Activated naive CD4-positive, alpha-beta T cell treated with anti-CD3 and anti-CD28 coated beads for 36 hours (primary cell): ENCODE measurements at regions of chr12 and their contacts with region 1.

Region 1: DNA sequence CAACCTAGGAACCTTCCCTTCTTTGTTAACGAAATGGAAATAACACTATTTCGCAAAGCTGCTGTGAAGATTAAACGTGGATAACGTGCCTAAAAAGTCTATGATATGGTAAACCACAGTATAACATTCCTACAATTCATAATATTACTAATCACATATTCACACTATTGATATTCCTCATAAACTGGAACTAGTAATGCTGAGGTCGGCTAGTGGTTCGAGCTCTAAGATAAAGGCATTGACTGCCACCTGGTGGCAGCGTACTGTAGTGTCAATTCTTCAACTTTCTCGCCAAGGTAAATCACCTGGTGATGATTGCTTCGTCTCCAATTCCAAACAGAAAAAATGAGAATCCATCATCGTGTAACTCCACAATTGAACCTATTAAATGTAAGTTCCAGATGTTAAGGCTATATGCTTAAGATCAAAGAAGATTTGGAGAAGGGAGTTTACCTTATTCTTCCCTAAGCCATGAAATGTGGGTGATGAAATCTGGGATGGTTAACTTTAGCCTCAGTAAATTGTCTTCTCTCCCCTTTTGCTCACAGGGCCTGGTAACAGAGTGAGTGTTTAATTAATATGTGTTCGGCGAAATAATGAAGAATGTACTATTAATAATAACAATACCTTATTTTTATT is 197.5 kb upstream of the TMEM132C start:
- DNase-seq: peak; percentile 43
- H3K4me3 Mint-ChIP-seq: no peak overlapping the region
- H3K27ac Mint-ChIP-seq: no peak overlapping the region
- H3K4me1 Mint-ChIP-seq: no peaks in the 10 kb centered on the region
- H3K27me3 Mint-ChIP-seq: no peaks in the 10 kb centered on the region

Region 2: GRCh38 chr12:127280393-127281275 is 788.8 kb before region 1 on chr12:
- CTCF ChIA-PET with region 1: no interaction called
- intact Hi-C with region 1: loop called (anchors 5 kb)
- DNase-seq: peak; percentile 77
- H3K4me3 Mint-ChIP-seq: no peak overlapping the region
- H3K27ac Mint-ChIP-seq: no peak overlapping the region
- H3K4me1 Mint-ChIP-seq: no peaks in the 10 kb centered on the region
- H3K27me3 Mint-ChIP-seq: peaks cover 25% of the 10 kb centered on the region

Region 3: GRCh38 chr12:127485528-127485927 is 584.0 kb before region 1 on chr12:
- CTCF ChIA-PET with region 1: no interaction called
- intact Hi-C with region 1: loop called (anchors 1 kb)
- DNase-seq: peak; percentile 66
- H3K4me3 Mint-ChIP-seq: no peak overlapping the region
- H3K27ac Mint-ChIP-seq: no peak overlapping the region
- H3K4me1 Mint-ChIP-seq: no peaks in the 10 kb centered on the region
- H3K27me3 Mint-ChIP-seq: peaks cover 2% of the 10 kb centered on the region

Region 4: GRCh38 chr12:127785540-127785939 is 283.9 kb before region 1 on chr12:
- CTCF ChIA-PET with region 1: no interaction called
- intact Hi-C with region 1: no loop called
- DNase-seq: no peak
- H3K4me3 Mint-ChIP-seq: no peak overlapping the region
- H3K27ac Mint-ChIP-seq: no peak overlapping the region
- H3K4me1 Mint-ChIP-seq: no peaks in the 10 kb centered on the region
- H3K27me3 Mint-ChIP-seq: peaks cover 2% of the 10 kb centered on the region